Heart left ventricle (tissue), 16 donors: ENCODE measurements at regions of chr15 and their contacts with region 1.

Region 1: DNA sequence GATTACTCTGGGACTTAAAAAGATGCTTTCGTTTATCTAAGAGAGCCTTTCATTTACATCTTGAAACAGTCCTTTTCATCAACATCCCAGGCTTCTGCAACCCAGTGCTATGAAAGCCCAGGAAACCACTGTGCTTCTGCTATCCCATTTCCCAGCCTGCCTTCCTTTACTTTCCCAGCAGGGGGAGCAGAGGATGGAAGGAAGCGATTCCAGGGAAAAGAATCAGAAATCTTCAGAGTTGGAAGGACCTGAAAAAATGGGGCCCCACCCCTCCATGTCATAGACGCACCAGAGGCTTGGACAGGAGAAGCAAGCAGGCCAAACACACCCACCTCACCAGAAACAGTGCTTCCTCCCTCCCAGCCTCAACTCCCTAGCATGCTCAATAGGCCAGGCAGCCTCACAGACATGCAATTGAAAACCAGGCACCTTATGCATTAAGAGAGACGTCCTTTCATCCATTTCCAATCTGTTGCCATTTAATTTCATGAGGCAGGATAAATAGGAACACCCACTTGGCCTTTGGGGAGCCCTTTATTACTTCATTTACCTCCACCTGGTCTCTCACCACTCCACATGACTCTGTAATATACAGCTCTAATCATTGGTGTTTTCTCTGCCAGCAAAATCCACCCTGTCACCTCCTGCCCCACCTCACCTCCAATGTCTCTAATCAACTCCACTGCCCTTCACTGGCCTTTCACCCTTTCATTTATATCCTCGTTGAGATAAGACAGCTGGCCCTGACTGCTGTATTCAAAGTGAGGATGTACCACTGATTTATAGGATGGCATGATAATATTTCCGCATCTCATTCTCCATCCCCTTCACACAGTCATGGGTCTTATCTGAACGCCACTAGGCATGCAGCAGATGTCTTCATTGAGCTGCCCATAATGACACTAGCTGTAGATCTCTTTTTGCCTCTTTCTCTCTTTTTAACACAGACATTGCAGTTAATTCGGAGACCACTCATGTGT is 583.9 kb downstream of the NTRK3 start:
- DNase-seq: peak in 1 of 5 donors; percentile 8
- ATAC-seq: peak in 1 of 4 donors; percentile 29
- H3K4me3 ChIP-seq: no peak overlapping the region
- H3K27ac ChIP-seq: no peak overlapping the region
- H3K4me1 ChIP-seq: peaks cover 0 to 5% (median 0%) of the 10 kb centered on the region in 12 donors
- H3K27me3 ChIP-seq: no peaks in the 10 kb centered on the region
- CTCF ChIP-seq: peak; percentile 40 to 72 (median 58)
- POLR2A ChIP-seq: no peak

Region 2: DNA sequence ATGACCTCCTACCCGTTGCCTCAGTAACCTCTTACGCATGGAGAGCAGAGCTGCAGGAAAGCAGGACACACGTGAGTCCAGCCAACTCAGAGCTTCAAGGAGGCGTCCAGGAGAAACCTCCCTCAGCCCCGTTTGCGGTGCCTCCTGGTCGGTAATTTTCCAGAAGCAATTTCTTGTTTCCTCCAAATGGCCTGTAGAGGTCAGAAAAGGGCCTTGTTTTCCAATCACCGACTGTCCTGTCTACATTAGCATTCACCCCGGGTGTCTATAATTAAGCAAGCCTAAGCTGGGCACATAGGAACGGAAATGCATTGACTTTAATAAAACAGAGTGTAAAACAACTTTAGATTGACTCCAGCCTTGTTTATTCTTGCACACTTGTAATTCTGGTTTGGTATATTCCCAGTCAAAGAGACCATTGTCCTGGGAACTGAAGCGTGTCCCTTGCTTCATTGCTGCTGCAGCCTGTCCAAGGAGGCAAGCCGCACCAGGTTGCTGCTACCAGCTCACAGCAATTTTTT is 756.7 kb before region 1 on chr15:
- intact Hi-C with region 1: loop called in 1 of 10 experiments (anchors 10 kb)
- DNase-seq: peak in 2 of 5 donors; percentile 21 to 33
- ATAC-seq: peak; percentile 66 to 81 (median 72)
- H3K4me3 ChIP-seq: no peak overlapping the region
- H3K27ac ChIP-seq: peak overlapping the region in 3 of 12 donors; percentile 68 to 78 (median 69)
- H3K4me1 ChIP-seq: peaks cover 0 to 34% (median 13%) of the 10 kb centered on the region in 12 donors
- H3K27me3 ChIP-seq: no peaks in the 10 kb centered on the region
- CTCF ChIP-seq: peak; percentile 17 to 68 (median 52)
- POLR2A ChIP-seq: no peak

Region 3: GRCh38 chr15:87732976-87733375 is 60.4 kb after region 1 on chr15:
- intact Hi-C with region 1: loop called in 1 of 10 experiments (anchors 10 kb)
- DNase-seq: no peak
- ATAC-seq: peak in 2 of 4 donors; percentile 38 to 59
- H3K4me3 ChIP-seq: no peak overlapping the region
- H3K27ac ChIP-seq: no peak overlapping the region
- H3K4me1 ChIP-seq: peaks cover 0 to 15% (median 3%) of the 10 kb centered on the region in 12 donors
- H3K27me3 ChIP-seq: no peaks in the 10 kb centered on the region
- CTCF ChIP-seq: no peak
- POLR2A ChIP-seq: no peak

Region 4: DNA sequence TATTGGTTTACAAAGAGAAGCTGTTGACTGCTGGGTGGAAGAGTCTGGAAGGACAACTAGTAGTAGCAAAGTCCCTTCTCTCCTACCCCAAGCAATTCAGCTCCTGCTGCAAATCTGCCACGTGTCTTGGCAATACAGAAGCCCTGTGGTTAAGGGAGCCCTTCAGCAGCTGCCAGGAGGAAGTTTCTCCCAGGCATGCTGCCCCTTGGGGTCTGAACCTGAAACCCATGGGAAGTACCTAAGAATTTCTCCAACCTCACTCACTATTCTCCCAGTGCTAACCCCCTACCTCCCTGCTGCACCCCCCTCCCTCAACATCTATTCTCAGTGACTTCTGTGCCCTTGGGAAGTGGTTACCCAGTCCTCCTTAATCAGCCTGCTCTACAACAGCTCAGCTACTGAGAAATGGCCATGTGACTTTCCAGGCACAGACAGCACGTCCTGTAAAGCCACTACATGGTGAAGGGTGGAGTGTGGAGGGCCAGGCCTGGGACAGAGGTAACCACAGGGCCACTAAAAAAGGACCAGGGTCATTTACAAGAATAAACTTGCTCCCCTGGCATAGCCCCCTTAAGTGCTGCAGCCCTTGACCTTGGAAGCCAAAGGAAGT is 267.4 kb after region 1 on chr15:
- intact Hi-C with region 1: loop called in 1 of 10 experiments (anchors 10 kb)
- DNase-seq: peak in 2 of 5 donors; percentile 33 to 41
- ATAC-seq: peak; percentile 72 to 86 (median 80)
- H3K4me3 ChIP-seq: no peak overlapping the region
- H3K27ac ChIP-seq: no peak overlapping the region
- H3K4me1 ChIP-seq: peaks cover 0 to 13% (median 5%) of the 10 kb centered on the region in 12 donors
- H3K27me3 ChIP-seq: no peaks in the 10 kb centered on the region
- CTCF ChIP-seq: no peak
- POLR2A ChIP-seq: no peak

Region 5: GRCh38 chr15:88018856-88019641 is 346.4 kb after region 1 on chr15:
- intact Hi-C with region 1: loop called in 1 of 10 experiments (anchors 5 kb)
- DNase-seq: no peak
- ATAC-seq: no peak
- H3K4me3 ChIP-seq: no peak overlapping the region
- H3K27ac ChIP-seq: no peak overlapping the region
- H3K4me1 ChIP-seq: no peaks in the 10 kb centered on the region
- H3K27me3 ChIP-seq: no peaks in the 10 kb centered on the region
- CTCF ChIP-seq: no peak
- POLR2A ChIP-seq: no peak

Region 6: DNA sequence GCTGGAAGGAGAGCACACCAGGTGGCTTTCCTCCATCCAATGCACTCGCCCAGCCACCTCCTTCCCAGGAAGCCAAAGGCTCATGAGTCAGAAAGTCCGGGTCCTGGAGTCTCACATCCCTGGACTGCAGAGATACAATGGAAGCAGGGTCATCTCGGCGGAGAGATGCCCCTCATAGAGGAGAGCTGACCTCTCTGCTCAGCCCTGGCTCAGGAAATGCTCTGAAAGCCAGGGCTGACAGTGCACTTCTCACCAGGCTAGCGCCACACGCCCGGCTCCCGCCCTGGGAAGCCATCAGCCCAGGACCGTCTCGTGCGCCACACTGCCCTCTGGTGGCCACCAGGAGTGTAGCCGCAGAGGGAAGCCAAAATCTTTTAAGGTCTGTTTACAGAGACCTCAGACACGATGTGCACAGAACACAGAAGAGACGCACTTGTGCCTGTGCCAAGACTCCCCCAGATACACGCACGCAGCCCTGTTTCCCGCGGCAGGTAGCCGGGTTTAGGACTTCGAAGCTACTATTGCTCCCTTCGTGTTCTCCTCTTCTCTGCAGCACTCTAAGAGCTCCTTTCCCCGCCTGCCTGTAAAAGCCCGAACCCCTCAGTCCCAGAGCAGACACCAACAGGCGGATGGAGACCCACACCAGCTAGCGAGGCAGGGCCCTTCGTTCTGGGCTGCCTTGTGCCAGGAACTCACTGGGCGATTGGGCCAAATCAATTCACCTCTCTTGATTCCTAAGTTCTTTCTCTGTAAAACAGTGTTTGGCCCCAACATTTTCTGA is 574.3 kb after region 1 on chr15:
- intact Hi-C with region 1: loop called in 7 of 10 experiments (anchors 2 to 10 kb)
- DNase-seq: peak; percentile 56 to 87 (median 76)
- ATAC-seq: peak; percentile 44 to 89 (median 82)
- H3K4me3 ChIP-seq: peak overlapping the region in 3 of 12 donors; percentile 17 to 25 (median 23)
- H3K27ac ChIP-seq: no peak overlapping the region
- H3K4me1 ChIP-seq: peaks cover 0 to 23% (median 4%) of the 10 kb centered on the region in 12 donors
- H3K27me3 ChIP-seq: peaks cover 0 to 6% (median 0%) of the 10 kb centered on the region in 9 donors
- CTCF ChIP-seq: peak; percentile 93 to 99 (median 96)
- POLR2A ChIP-seq: no peak

Region 7: DNA sequence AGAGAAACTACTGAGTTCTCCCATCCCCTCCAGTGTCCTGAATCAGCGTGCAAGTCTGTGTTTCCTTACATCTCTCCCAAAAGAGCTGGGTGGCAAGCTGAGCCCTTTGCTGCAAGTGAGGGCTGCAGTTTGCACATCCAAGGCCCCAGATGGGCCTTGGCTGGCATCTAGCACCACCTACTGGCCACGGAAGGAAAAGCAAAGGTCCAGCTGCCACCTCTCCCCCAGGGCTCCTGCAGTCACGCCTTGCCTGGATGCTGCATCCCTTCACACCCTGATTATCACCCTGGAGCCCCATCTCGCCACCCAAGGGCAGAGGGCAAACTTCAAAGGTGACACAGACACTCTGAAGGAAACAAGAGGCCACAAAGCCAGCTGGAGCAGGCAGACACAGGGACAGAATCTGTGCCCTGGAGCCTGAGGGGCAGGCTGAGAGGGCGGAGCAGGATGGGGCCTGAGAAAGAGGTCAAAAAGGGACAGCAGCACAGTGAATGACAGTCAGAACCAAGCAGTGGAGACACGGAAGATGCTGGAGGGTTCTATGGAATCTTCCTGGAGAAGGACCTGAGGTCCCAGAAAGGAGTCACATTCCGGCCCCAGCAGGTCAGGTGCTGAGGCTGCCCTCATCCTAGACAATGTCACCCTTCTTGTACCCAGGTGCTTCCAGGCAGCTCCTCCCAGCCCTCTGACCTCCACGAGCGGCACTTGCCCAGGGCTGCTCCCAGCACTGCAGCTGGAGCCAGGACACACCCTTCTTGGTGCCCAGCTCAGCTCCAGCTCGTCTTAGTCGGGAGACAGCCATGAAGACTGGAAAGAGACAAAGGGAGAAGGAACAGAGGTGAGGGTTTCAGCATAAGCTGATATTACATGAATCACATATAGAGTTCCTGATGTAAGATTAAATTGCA is 602.2 kb after region 1 on chr15:
- intact Hi-C with region 1: loop called in 1 of 10 experiments (anchors 10 kb)
- DNase-seq: peak in 4 of 5 donors; percentile 46 to 57 (median 52)
- ATAC-seq: peak; percentile 32 to 81 (median 78)
- H3K4me3 ChIP-seq: no peak overlapping the region
- H3K27ac ChIP-seq: no peak overlapping the region
- H3K4me1 ChIP-seq: no peaks in the 10 kb centered on the region
- H3K27me3 ChIP-seq: peaks cover 0 to 16% (median 0%) of the 10 kb centered on the region in 9 donors
- CTCF ChIP-seq: peak; percentile 67 to 84 (median 80)
- POLR2A ChIP-seq: no peak